ENCODE measurements at regions of chr2 and their contacts with region 1.

Region 1: GRCh38 chr2:192535956-192536685 is 341.4 kb upstream of the TMEFF2 start:
- DNase-seq: peak; percentile 18
- H3K4me3 ChIP-seq: no peak overlapping the region
- H3K27ac ChIP-seq: no peak overlapping the region
- H3K4me1 ChIP-seq: peaks cover 23% of the 10 kb centered on the region
- H3K27me3 ChIP-seq: no peaks in the 10 kb centered on the region
- CTCF ChIP-seq: no peak

Region 2: GRCh38 chr2:192465141-192465540 is 71.0 kb before region 1 on chr2:
- CTCF ChIA-PET with region 1: no interaction called
- POLR2A ChIA-PET with region 1: no interaction called
- intact Hi-C with region 1: loop called (anchors 5 kb)
- DNase-seq: no peak
- H3K4me3 ChIP-seq: no peak overlapping the region
- H3K27ac ChIP-seq: no peak overlapping the region
- H3K4me1 ChIP-seq: no peaks in the 10 kb centered on the region
- H3K27me3 ChIP-seq: no peaks in the 10 kb centered on the region
- CTCF ChIP-seq: no peak

Region 3: GRCh38 chr2:192655916-192656315 is 119.8 kb after region 1 on chr2:
- CTCF ChIA-PET with region 1: no interaction called
- POLR2A ChIA-PET with region 1: no interaction called
- intact Hi-C with region 1: no loop called
- DNase-seq: no peak
- H3K4me3 ChIP-seq: no peak overlapping the region
- H3K27ac ChIP-seq: no peak overlapping the region
- H3K4me1 ChIP-seq: no peaks in the 10 kb centered on the region
- H3K27me3 ChIP-seq: no peaks in the 10 kb centered on the region
- CTCF ChIP-seq: no peak